Activated B cell treated with CpG ODN at 0.5 μM for 24 hours (primary cell): ENCODE measurements at regions of chr14 and their contacts with region 1.

Region 1: DNA sequence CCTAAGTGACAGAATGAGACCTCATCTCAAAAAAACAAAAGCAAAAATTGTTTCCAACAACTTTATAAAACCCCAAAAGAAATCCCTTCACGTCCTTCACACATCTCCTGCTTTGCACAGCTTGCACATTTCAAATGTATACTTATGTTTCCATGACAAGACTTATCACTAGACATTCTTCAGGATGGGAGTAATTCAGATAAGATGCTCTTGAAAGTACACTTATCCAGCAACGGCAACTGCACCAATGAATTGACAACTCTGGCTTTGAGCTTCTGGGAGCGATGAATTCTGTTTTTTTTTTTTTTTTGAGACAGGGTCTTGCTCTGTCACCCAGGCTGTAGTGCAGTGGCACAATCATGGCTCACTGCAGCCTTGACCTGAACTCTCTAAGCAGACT is 30.8 kb upstream of the AKAP5 start:
- DNase-seq: no peak
- ATAC-seq: no peak
- H3K4me3 Mint-ChIP-seq: no peak overlapping the region
- H3K27ac Mint-ChIP-seq: no peak overlapping the region
- H3K4me1 Mint-ChIP-seq: no peaks in the 10 kb centered on the region
- H3K27me3 Mint-ChIP-seq: no peaks in the 10 kb centered on the region
- CTCF ChIP-seq: no peak

Region 2: GRCh38 chr14:64444984-64445845 is 10.7 kb after region 1 on chr14:
- CTCF ChIA-PET with region 1: interaction called, 12 read pairs
- POLR2A ChIA-PET with region 1: interaction called, 8 read pairs
- intact Hi-C with region 1: loop called (anchors 1 kb)
- DNase-seq: no peak
- ATAC-seq: peak; percentile 94
- H3K4me3 Mint-ChIP-seq: peak overlapping the region; percentile 39
- H3K27ac Mint-ChIP-seq: peak overlapping the region; percentile 93
- H3K4me1 Mint-ChIP-seq: peaks cover 53% of the 10 kb centered on the region
- H3K27me3 Mint-ChIP-seq: no peaks in the 10 kb centered on the region
- CTCF ChIP-seq: no peak

Region 3: GRCh38 chr14:64465191-64465822 is 30.8 kb after region 1 on chr14 and contains the start of gene AKAP5:
- CTCF ChIA-PET with region 1: interaction called, 26 read pairs
- POLR2A ChIA-PET with region 1: interaction called, 7 read pairs
- intact Hi-C with region 1: no loop called
- DNase-seq: peak; percentile 67
- ATAC-seq: peak; percentile 91
- H3K4me3 Mint-ChIP-seq: peak within 1 kb of the TSS; percentile 86
- H3K27ac Mint-ChIP-seq: peak within 1 kb of the TSS; percentile 80
- H3K4me1 Mint-ChIP-seq: peaks cover 51% of the 10 kb centered on the region
- H3K27me3 Mint-ChIP-seq: no peaks in the 10 kb centered on the region
- CTCF ChIP-seq: no peak
- total RNA-seq, gene AKAP5: 4.3 and 5.1 TPM in 2 replicates

Region 4: DNA sequence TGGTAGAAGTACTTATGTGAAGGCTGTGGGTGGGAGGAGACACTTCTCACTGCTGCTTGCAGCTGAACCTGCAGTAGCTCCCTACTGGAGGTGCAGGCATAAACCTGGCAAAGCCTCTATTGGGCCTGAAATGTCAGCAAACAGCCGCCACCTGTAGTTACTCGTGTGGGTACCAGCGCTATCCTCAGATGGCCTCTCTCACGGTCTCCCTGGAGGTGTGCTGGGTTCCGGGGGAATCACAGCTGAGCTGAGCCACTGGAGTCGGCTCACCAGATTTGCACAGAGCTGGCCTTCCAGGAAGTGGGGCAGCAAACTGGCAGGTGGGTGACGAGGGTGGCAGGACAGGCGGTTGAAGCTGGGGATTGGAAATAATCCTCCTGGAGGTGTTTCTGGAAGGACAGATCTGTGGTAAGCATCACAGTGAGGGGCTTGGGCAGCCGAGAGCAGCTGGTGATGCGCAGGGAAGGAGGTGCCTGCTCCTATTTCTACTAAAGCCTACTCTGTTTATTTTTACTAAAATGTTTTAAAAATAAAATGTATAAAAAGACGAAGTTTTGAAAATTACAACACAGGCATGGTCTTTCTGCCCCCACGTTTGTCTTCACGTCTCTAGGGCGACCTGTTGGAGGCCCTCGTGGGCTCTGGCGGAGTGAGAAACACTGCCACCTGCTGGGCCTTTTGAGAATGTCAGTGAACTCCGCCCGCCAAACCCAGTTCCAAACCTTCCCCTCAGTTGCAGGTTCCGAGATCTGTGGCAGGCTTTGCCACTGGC is 201.9 kb after region 1 on chr14:
- CTCF ChIA-PET with region 1: interaction called, 11 read pairs
- POLR2A ChIA-PET with region 1: no interaction called
- intact Hi-C with region 1: loop called (anchors 2 kb)
- DNase-seq: peak; percentile 54
- ATAC-seq: peak; percentile 93
- H3K4me3 Mint-ChIP-seq: no peak overlapping the region
- H3K27ac Mint-ChIP-seq: no peak overlapping the region
- H3K4me1 Mint-ChIP-seq: peaks cover 7% of the 10 kb centered on the region
- H3K27me3 Mint-ChIP-seq: no peaks in the 10 kb centered on the region
- CTCF ChIP-seq: peak; percentile 32